Naive thymus-derived CD4-positive, alpha-beta T cell (primary cell): ENCODE measurements at regions of chr3 and their contacts with region 1.

Region 1: GRCh38 chr3:50272911-50273693 is 4.2 kb downstream of the SEMA3B start:
- DNase-seq: peak; percentile 65 to 95 (median 80)
- ATAC-seq: peak; percentile 92
- H3K4me3 ChIP-seq: peak overlapping the region; percentile 48
- H3K4me3 Mint-ChIP-seq: peak overlapping the region; percentile 59 to 88 (median 76)
- H3K27ac ChIP-seq: no peak overlapping the region
- H3K27ac Mint-ChIP-seq: peak overlapping the region in 5 of 9 donors; percentile 20 to 82 (median 72)
- H3K4me1 ChIP-seq: peaks cover 10 to 22% of the 10 kb centered on the region in 2 donors
- H3K4me1 Mint-ChIP-seq: peaks cover 21 to 31% (median 26%) of the 10 kb centered on the region in 7 donors
- H3K27me3 ChIP-seq: peaks cover 15 to 23% of the 10 kb centered on the region in 2 donors
- H3K27me3 Mint-ChIP-seq: peaks cover 21 to 50% (median 29%) of the 10 kb centered on the region in 5 donors

Region 2: GRCh38 chr3:50121416-50122032 is 151.6 kb before region 1 on chr3:
- CTCF ChIA-PET with region 1: interaction called, 3 read pairs
- POLR2A ChIA-PET with region 1: no interaction called
- intact Hi-C with region 1: loop called (anchors 1 kb)
- DNase-seq: peak; percentile 43 to 72 (median 57)
- ATAC-seq: peak; percentile 88
- H3K4me3 ChIP-seq: no peak overlapping the region
- H3K4me3 Mint-ChIP-seq: peak overlapping the region in 1 of 10 donors; percentile 43
- H3K27ac ChIP-seq: peak overlapping the region; percentile 43
- H3K27ac Mint-ChIP-seq: peak overlapping the region in 4 of 9 donors; percentile 50 to 55 (median 53)
- H3K4me1 ChIP-seq: no peaks in the 10 kb centered on the region
- H3K4me1 Mint-ChIP-seq: peaks cover 0 to 9% (median 0%) of the 10 kb centered on the region in 7 donors
- H3K27me3 ChIP-seq: no peaks in the 10 kb centered on the region
- H3K27me3 Mint-ChIP-seq: no peaks in the 10 kb centered on the region

Region 3: GRCh38 chr3:50227390-50228183 is 45.5 kb before region 1 on chr3:
- CTCF ChIA-PET with region 1: interaction called, 10 read pairs
- POLR2A ChIA-PET with region 1: no interaction called
- intact Hi-C with region 1: loop called (anchors 1 kb)
- DNase-seq: peak; percentile 86 to 96 (median 91)
- ATAC-seq: peak; percentile 91
- H3K4me3 ChIP-seq: peak overlapping the region; percentile 88
- H3K4me3 Mint-ChIP-seq: peak overlapping the region; percentile 89 to 98 (median 96)
- H3K27ac ChIP-seq: peak overlapping the region; percentile 77
- H3K27ac Mint-ChIP-seq: peak overlapping the region; percentile 86 to 97 (median 93)
- H3K4me1 ChIP-seq: peaks cover 9 to 12% of the 10 kb centered on the region in 2 donors
- H3K4me1 Mint-ChIP-seq: peaks cover 16 to 36% (median 34%) of the 10 kb centered on the region in 7 donors
- H3K27me3 ChIP-seq: no peaks in the 10 kb centered on the region
- H3K27me3 Mint-ChIP-seq: peaks cover 0 to 17% (median 0%) of the 10 kb centered on the region in 5 donors

Region 4: DNA sequence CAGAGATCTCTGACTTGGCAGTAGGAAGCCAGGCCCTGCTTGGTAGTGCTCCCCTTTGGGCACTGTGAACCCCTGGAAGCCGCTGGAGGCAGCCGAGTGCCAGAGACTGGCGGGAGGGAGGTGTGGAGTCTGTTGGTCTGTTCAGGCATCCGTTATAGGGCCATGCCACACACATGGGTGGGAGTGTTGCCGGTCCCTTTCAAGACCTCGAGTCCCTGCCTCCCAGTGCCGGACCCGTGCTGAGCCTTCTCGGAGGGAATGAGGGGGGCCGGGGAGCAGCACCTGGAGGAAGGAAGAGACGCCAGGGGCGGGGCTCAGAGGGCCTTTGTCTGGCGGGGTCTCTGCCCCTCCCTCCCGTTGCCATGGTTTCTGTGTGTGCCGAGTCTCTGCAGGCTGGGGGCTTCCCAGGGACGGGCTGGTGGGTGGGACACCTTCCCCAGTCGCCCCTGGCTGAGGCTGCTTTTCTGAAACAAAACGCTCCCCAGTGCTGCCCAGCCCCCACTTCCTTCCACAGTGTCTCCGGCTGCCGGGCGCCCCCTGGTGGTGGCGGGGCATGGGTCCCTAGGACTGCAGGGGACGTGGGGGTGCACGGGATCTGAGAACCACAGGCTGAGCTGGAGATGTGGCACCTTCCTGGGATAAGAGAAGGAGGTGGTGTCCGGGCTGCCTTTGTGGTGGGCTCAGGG is 27.1 kb before region 1 on chr3:
- CTCF ChIA-PET with region 1: interaction called, 13 read pairs
- POLR2A ChIA-PET with region 1: interaction called, 3 read pairs
- intact Hi-C with region 1: loop called (anchors 1 kb)
- DNase-seq: peak; percentile 88 to 99 (median 94)
- ATAC-seq: peak; percentile 90
- H3K4me3 ChIP-seq: peak overlapping the region; percentile 52
- H3K4me3 Mint-ChIP-seq: peak overlapping the region; percentile 77 to 89 (median 82)
- H3K27ac ChIP-seq: peak overlapping the region; percentile 88
- H3K27ac Mint-ChIP-seq: peak overlapping the region; percentile 80 to 96 (median 95)
- H3K4me1 ChIP-seq: peaks cover 61 to 87% of the 10 kb centered on the region in 2 donors
- H3K4me1 Mint-ChIP-seq: peaks cover 57 to 90% (median 74%) of the 10 kb centered on the region in 7 donors
- H3K27me3 ChIP-seq: no peaks in the 10 kb centered on the region
- H3K27me3 Mint-ChIP-seq: no peaks in the 10 kb centered on the region

Region 5: DNA sequence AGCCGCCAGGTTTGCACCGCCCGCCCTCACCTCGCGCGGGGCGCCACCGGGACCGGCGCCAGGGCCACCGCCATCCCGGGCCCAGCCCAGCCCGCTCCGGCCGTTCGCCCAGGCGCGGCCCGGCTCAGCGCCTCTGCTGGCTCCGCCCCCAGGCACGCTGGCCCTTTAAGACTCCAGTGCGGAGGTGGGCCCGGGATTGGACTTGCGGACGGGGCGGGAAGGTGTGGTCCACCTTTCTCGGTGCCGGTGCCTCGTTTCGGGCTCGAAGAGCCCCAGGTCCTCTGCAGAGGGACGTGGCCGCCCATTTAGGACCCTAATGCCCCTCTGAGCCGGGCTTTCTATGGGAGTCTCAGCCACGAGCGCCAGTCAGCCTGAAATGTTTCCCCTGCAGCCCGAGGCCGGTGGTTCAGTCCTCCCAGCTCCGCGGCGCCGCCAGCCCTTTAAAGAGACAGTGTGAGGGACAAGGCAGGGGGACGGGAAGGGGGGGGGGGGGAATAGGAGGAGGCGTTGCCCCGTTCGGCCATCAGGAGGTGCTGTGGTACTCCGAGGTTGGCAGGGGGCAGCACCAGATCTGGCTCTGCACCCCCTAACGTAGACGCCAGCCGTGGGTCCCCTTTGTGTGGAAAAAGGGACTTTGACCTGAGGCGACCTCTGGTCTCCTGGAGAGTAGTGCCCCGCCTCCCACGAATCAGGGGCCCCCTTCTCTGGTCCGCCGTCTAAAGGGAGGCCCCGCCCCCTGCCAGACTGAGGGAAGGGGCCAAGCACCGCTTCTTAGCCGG is 48.4 kb after region 1 on chr3:
- CTCF ChIA-PET with region 1: interaction called, 3 read pairs
- POLR2A ChIA-PET with region 1: interaction called, 3 read pairs
- intact Hi-C with region 1: loop called (anchors 1 kb)
- DNase-seq: peak; percentile 67 to 90 (median 83)
- ATAC-seq: peak; percentile 83
- H3K4me3 ChIP-seq: peak overlapping the region; percentile 97
- H3K4me3 Mint-ChIP-seq: peak overlapping the region; percentile 74 to 90 (median 82)
- H3K27ac ChIP-seq: peak overlapping the region; percentile 95
- H3K27ac Mint-ChIP-seq: peak overlapping the region; percentile 40 to 96 (median 93)
- H3K4me1 ChIP-seq: peaks cover 12 to 21% of the 10 kb centered on the region in 2 donors
- H3K4me1 Mint-ChIP-seq: peaks cover 21 to 45% (median 36%) of the 10 kb centered on the region in 7 donors
- H3K27me3 ChIP-seq: no peaks in the 10 kb centered on the region
- H3K27me3 Mint-ChIP-seq: no peaks in the 10 kb centered on the region

Region 6: GRCh38 chr3:50687127-50687751 is 414.1 kb after region 1 on chr3:
- CTCF ChIA-PET with region 1: no interaction called
- POLR2A ChIA-PET with region 1: no interaction called
- intact Hi-C with region 1: no loop called
- DNase-seq: no peak
- ATAC-seq: no peak
- H3K4me3 ChIP-seq: no peak overlapping the region
- H3K4me3 Mint-ChIP-seq: no peak overlapping the region
- H3K27ac ChIP-seq: no peak overlapping the region
- H3K27ac Mint-ChIP-seq: no peak overlapping the region
- H3K4me1 ChIP-seq: no peaks in the 10 kb centered on the region
- H3K4me1 Mint-ChIP-seq: peaks cover 0 to 4% (median 0%) of the 10 kb centered on the region in 7 donors
- H3K27me3 ChIP-seq: no peaks in the 10 kb centered on the region
- H3K27me3 Mint-ChIP-seq: peaks cover 3 to 24% (median 3%) of the 10 kb centered on the region in 5 donors